ENCODE measurements at regions of chr1 and their contacts with region 1.

Region 1: GRCh38 chr1:221794079-221794670 is 52.3 kb upstream of the DUSP10 start:
- DNase-seq: no peak
- H3K4me3 Mint-ChIP-seq: peak overlapping the region; percentile 48
- H3K27ac Mint-ChIP-seq: peak overlapping the region; percentile 92
- H3K4me1 Mint-ChIP-seq: peaks cover 36% of the 10 kb centered on the region
- H3K27me3 Mint-ChIP-seq: no peaks in the 10 kb centered on the region

Region 2: GRCh38 chr1:221439008-221439733 is 355.0 kb before region 1 on chr1:
- intact Hi-C with region 1: no loop called
- DNase-seq: peak; percentile 25
- H3K4me3 Mint-ChIP-seq: peak overlapping the region; percentile 9
- H3K27ac Mint-ChIP-seq: peak overlapping the region; percentile 88
- H3K4me1 Mint-ChIP-seq: peaks cover 34% of the 10 kb centered on the region
- H3K27me3 Mint-ChIP-seq: peaks cover 6% of the 10 kb centered on the region

Region 3: DNA sequence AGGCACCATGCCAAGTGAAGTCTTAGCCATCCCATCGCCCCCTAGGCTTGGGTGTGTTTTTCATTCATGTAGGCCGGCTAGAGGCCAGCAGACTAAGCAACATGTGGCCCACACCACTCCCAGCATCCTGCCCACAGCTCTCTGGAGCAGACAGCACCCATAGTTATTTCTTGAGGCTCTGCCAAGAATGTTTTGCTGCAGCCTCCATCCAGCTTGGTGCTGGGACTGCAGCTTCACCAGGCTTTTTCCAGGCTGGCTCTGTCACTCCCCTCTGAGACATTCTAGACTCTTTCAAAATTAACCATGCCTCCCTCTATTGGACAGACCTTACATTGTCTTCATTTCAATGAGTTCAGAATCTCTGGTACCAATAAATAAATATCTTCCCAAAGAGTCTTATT is 156.5 kb before region 1 on chr1:
- intact Hi-C with region 1: no loop called
- DNase-seq: no peak
- H3K4me3 Mint-ChIP-seq: no peak overlapping the region
- H3K27ac Mint-ChIP-seq: no peak overlapping the region
- H3K4me1 Mint-ChIP-seq: peaks cover 5% of the 10 kb centered on the region
- H3K27me3 Mint-ChIP-seq: peaks cover 2% of the 10 kb centered on the region

Region 4: DNA sequence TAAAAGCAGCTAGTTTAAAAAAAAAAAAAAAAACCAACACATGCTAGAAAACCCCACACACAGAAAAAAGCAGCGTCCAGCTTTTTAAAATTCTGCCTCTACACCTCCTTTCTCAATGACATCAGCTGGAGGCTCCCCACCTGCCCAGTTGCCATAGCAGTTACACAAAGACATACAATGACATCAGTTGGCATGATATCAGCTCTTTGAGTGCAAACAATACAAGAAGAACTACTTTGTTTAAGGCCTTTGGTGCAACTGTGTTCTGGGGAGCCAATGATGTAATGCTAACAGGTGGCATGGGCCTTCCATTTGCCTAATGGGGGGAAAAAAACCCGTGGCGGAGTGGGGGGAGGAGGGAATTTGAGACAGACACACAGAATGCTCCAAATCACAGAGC is 85.2 kb before region 1 on chr1:
- intact Hi-C with region 1: loop called (anchors 1 kb)
- DNase-seq: peak; percentile 41
- H3K4me3 Mint-ChIP-seq: peak overlapping the region; percentile 33
- H3K27ac Mint-ChIP-seq: peak overlapping the region; percentile 98
- H3K4me1 Mint-ChIP-seq: peaks cover 65% of the 10 kb centered on the region
- H3K27me3 Mint-ChIP-seq: no peaks in the 10 kb centered on the region

Region 5: GRCh38 chr1:221809031-221810029 is 15.2 kb after region 1 on chr1:
- intact Hi-C with region 1: loop called (anchors 1 kb)
- DNase-seq: no peak
- H3K4me3 Mint-ChIP-seq: no peak overlapping the region
- H3K27ac Mint-ChIP-seq: peak overlapping the region; percentile 81
- H3K4me1 Mint-ChIP-seq: peaks cover 43% of the 10 kb centered on the region
- H3K27me3 Mint-ChIP-seq: peaks cover 4% of the 10 kb centered on the region

Region 6: GRCh38 chr1:221829327-221830015 is 35.3 kb after region 1 on chr1:
- intact Hi-C with region 1: loop called (anchors 1 kb)
- DNase-seq: peak; percentile 40
- H3K4me3 Mint-ChIP-seq: peak overlapping the region; percentile 67
- H3K27ac Mint-ChIP-seq: peak overlapping the region; percentile 97
- H3K4me1 Mint-ChIP-seq: peaks cover 70% of the 10 kb centered on the region
- H3K27me3 Mint-ChIP-seq: no peaks in the 10 kb centered on the region

Region 7: GRCh38 chr1:221878134-221878533 is 84.0 kb after region 1 on chr1:
- intact Hi-C with region 1: loop called (anchors 5 kb)
- DNase-seq: no peak
- H3K4me3 Mint-ChIP-seq: no peak overlapping the region
- H3K27ac Mint-ChIP-seq: no peak overlapping the region
- H3K4me1 Mint-ChIP-seq: peaks cover 12% of the 10 kb centered on the region
- H3K27me3 Mint-ChIP-seq: peaks cover 6% of the 10 kb centered on the region

Measured in activated T-helper 2 cell treated with anti-CD3 and anti-CD28 coated beads, Interferon-gamma antibody, Interleukin-2, Interleukin-4, amounts not matched to agents 10 μg/mL and 5 μg/mL and 100 μg/mL, durations not matched to agents 14 hours and 24 hours and 36 hours (primary cell).